Tibial artery (tissue), 4 donors: ENCODE measurements at regions of chr3 and their contacts with region 1.

Region 1: DNA sequence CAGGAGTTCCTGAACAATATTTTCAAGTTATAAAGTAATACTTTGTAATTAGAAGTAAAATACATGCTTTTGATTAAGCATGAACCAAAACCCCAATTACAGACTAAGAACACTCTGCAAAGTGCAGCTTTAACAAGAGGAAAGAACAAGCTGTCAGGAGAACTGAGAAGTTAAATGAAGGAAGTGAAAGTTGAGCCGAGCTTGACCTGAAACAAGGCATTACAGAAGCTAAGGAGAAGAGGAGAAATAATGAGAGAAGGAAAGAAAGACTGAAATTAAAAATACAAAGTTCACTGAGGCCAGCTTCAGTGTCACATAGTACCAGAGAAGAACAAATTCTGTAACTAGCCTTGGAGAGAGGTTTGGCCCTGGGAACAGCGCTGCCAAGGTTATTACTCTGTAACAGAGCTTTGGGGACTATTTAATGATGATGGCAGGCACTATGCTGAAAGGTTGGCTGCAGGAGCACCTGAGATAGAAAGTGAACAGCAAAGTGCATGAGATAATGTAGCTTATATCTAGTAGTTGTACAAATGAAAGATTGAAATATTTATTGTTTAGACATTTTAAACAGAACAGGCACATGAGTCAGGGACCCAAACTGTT is 241.9 kb upstream of the PEX5L start:
- DNase-seq: no peak
- H3K4me3 ChIP-seq: no peak overlapping the region
- H3K27ac ChIP-seq: no peak overlapping the region
- H3K4me1 ChIP-seq: no peaks in the 10 kb centered on the region
- H3K27me3 ChIP-seq: no peaks in the 10 kb centered on the region
- CTCF ChIP-seq: no peak

Region 2: DNA sequence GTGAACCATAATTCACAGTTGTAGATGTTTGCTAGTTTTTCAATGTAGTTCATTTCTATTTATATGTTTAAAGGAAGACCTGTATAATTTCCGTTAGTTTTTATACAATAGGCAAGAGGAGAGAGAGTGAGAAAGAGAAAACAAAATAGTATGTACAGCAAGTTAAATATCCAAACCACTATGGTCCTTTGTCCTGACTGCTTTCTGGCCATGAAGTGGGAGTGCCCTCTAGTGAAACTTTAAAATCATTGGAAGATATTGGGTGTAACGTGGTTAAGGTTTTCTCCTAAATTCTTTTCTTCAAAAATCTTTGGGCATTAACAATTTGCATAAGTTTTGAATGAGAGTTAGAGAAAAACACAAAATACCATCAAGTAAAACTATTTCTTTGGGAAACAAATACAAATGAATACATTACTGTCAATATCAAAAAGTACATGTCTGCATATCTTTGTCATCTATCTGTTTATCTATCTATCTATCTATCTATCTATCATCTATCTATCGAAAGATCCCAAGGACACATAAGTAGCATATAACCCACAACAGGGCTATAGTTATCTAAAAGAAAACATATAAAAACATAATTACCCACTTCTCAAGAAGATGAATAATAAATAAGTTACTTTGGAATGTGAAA is 1980.0 kb after region 1 on chr3:
- intact Hi-C with region 1: loop called (anchors 10 kb)
- DNase-seq: no peak
- H3K4me3 ChIP-seq: no peak overlapping the region
- H3K27ac ChIP-seq: no peak overlapping the region
- H3K4me1 ChIP-seq: no peaks in the 10 kb centered on the region
- H3K27me3 ChIP-seq: peaks cover 0 to 7% of the 10 kb centered on the region in 2 donors
- CTCF ChIP-seq: peak in 1 of 2 experiments; percentile 10